PC-3 (cell line): ENCODE measurements at regions of chr17 and their contacts with region 1.

Region 1: GRCh38 chr17:79026345-79027273 is 2.6 kb downstream of the C1QTNF1 start:
- DNase-seq: peak; percentile 95
- ATAC-seq: peak; percentile 61
- H3K4me3 ChIP-seq: peak overlapping the region; percentile 56
- H3K27ac ChIP-seq: peak overlapping the region; percentile 85
- H3K4me1 ChIP-seq: peaks cover 45% of the 10 kb centered on the region
- H3K27me3 ChIP-seq: no peaks in the 10 kb centered on the region
- CTCF ChIP-seq: peak; percentile 34; the same call in 1 of the 2 replicates

Region 2: DNA sequence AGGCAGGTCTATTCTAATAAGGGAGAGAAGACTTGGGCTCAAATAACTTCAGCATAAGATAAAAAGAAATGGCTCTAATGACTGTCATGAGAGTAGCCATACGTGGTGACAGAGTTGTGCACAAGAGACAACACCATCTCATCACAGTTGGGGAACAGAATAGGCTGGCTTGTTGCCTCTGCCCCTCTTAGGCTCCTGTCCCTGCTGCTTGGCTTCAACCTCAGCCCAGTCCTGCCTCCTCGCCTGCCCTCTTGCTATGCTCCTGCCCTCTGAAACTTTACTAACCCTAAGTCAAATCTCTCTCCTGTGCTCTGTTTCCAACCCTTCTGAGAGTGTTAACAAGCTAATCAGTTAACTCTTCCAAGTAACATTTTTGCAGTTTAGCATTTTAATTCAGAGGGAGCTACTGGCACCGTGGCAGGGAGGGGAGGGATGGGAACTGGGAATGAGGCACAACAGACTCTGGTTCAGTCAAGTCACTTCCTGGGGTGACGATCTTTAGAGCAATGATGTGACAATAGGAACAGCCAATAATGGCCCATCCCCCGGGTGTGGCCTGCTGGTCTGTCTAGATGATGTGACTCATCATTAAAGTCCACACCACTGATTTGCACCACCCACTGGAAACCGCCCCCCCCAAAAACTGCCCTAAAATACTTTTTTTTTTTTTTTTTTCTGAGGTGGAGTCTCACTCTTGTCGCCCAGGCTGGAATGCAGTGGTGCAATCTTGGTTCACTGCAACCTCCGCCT is 484.9 kb before region 1 on chr17:
- CTCF ChIA-PET with region 1: no interaction called
- POLR2A ChIA-PET with region 1: no interaction called
- intact Hi-C with region 1: no loop called
- DNase-seq: peak; percentile 82
- ATAC-seq: peak; percentile 58
- H3K4me3 ChIP-seq: no peak overlapping the region
- H3K27ac ChIP-seq: peak overlapping the region; percentile 62
- H3K4me1 ChIP-seq: peaks cover 21% of the 10 kb centered on the region
- H3K27me3 ChIP-seq: no peaks in the 10 kb centered on the region
- CTCF ChIP-seq: no peak

Region 3: DNA sequence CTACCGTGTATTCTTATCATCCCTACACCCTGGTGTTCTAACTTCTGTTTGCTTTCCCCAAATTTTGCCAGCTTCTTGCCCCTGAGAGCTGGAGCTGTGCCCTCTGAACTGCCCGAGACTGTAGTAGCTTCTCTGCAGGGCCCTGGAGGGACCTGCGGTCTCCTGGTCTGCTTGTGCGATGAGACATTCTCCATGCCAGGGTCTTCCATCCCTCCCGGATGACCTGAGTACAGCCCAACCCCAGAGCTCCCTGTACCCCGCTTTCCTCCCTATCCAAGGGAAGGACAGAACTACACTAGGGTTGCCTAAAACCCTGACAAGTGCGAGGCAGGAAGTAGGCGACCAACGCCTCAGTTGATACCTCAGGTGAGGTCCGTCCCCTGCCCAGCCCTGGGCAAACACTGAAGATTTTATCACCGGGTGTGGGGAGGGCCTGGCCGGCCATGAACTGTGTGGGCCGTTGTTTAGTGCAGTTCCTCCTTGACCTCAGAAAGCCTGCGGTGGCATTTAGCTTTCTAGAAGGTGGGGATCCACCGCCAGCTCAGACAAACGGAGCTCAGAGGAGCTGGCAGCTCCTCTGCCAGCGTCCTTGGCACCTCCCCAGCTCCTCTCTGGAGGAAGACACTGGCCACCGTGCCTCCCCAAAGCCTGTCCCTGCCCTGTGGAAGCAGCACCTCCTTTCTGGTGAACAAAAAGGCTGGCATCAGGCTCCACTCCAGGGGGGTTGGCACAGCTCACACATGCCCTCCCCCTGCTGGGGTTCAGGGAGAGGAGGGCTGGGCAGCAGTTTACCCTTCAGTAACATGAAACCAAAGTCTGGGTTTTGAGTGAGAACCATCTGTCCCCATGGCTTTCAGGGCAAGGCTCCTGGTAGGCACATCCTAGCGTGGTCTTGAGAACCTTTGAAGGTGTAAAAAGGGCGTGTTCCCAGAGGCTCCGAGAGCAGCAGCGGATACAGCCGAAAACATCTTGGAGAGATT is 30.6 kb before region 1 on chr17:
- CTCF ChIA-PET with region 1: no interaction called
- POLR2A ChIA-PET with region 1: interaction called, 25 read pairs
- intact Hi-C with region 1: no loop called
- DNase-seq: peak; percentile 96
- ATAC-seq: peak; percentile 79
- H3K4me3 ChIP-seq: peak overlapping the region; percentile 9; the same call in 1 of the 2 replicates
- H3K27ac ChIP-seq: peak overlapping the region; percentile 91
- H3K4me1 ChIP-seq: peaks cover 48% of the 10 kb centered on the region
- H3K27me3 ChIP-seq: no peaks in the 10 kb centered on the region
- CTCF ChIP-seq: no peak

Region 4: DNA sequence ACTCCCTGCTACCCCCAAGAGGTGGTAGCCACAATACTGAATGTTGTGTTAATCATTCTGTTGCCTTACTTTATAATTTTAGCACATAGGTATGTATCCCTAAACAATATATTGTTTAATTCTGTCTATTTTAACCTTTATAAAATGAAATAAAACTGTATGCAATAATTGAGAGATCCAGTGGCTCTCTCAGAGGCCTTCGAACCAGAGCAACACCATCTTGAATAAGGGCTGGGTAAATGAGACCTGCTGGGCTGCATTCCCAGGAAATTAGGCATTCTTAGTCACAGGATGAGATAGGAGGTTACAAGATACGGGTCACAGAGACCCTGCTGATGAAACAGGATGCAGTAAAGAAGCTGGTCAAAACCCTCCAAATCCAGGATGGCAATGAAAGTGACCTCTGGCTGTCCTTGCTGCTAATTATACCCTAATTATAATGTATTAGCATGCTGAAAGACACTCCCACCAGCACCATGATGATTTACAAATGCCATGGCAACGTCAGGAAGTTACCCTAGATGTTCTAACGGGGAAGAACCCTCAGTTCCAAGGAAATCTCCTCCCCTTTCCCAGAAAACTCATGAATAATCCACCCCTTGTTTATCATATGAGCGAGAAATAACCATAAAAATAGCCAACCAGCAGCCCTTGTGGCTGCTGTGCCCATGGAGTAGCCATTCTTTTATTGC is 15.0 kb before region 1 on chr17:
- CTCF ChIA-PET with region 1: no interaction called
- POLR2A ChIA-PET with region 1: no interaction called
- intact Hi-C with region 1: no loop called
- DNase-seq: peak; percentile 97
- ATAC-seq: peak; percentile 63
- H3K4me3 ChIP-seq: no peak overlapping the region
- H3K27ac ChIP-seq: peak overlapping the region; percentile 72
- H3K4me1 ChIP-seq: peaks cover 50% of the 10 kb centered on the region
- H3K27me3 ChIP-seq: no peaks in the 10 kb centered on the region
- CTCF ChIP-seq: no peak